ENCODE measurements at regions of chr19 and their contacts with region 1.

Region 1: GRCh38 chr19:40633207-40633606 is 32.0 kb downstream of the LTBP4 start:
- DNase-seq: no peak
- ATAC-seq: no peak
- H3K4me3 Mint-ChIP-seq: no peak overlapping the region
- H3K27ac Mint-ChIP-seq: no peak overlapping the region
- H3K4me1 Mint-ChIP-seq: peaks cover 4% of the 10 kb centered on the region
- H3K27me3 Mint-ChIP-seq: peaks cover 13% of the 10 kb centered on the region

Region 2: GRCh38 chr19:40305403-40305802 is 327.8 kb before region 1 on chr19:
- CTCF ChIA-PET with region 1: interaction called, 27 read pairs
- DNase-seq: peak; percentile 87
- ATAC-seq: peak; percentile 76
- H3K4me3 Mint-ChIP-seq: no peak overlapping the region
- H3K27ac Mint-ChIP-seq: no peak overlapping the region
- H3K4me1 Mint-ChIP-seq: peaks cover 4% of the 10 kb centered on the region
- H3K27me3 Mint-ChIP-seq: no peaks in the 10 kb centered on the region

Region 3: DNA sequence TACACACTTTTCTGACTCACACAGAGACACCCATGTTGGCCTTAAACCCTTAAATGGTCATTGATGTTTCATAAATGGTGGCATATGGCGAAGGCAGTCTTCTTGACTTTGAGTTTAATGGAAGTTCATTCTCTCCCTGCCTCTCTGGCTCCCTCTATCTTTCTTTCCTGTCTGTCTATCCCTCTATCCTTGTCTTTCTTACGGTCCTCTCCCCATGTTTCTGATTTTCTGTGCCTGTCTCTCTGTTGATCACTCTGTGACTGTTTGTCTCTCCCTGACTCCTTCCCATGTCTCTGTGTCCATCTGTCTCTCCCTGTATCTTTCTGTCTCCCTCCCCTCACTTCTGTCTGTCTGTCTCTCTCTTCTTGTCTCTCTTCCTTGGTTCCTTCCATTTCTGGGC is 99.7 kb before region 1 on chr19:
- CTCF ChIA-PET with region 1: interaction called, 12 read pairs
- DNase-seq: no peak
- ATAC-seq: no peak
- H3K4me3 Mint-ChIP-seq: no peak overlapping the region
- H3K27ac Mint-ChIP-seq: no peak overlapping the region
- H3K4me1 Mint-ChIP-seq: peaks cover 13% of the 10 kb centered on the region
- H3K27me3 Mint-ChIP-seq: peaks cover 29% of the 10 kb centered on the region

Region 4: DNA sequence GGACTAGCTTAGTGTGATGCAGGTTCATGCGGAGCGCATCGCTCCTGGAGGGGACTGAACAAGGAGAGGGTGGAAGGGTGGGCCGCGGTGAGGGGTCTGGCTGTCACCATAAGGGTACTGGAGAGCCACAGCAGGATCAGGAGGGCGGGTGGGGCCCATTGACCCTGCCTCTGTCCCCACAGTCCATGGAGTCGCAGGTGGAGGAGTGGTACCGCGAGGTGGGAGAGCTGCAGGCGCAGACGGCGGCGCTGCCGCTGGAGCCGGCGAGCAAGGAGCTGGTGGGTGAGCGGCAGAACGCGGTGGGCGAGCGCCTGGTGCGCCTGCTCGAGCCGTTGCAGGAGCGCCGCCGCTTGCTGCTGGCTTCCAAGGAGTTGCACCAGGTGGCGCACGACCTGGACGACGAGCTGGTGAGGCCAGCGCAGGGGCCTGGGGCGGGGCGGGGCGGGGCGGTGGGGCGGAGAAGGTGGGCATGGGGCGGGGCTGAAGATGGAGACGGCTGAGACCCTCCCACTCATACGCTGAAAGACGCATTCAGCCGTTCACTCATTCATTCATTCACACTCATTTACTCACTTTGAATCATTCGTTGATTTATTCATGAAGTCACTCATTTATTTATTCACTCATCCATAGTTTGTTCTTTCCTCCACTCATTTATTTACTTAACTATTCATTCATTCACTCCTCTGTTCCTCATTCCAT is 84.0 kb before region 1 on chr19:
- CTCF ChIA-PET with region 1: interaction called, 21 read pairs
- DNase-seq: peak; percentile 78
- ATAC-seq: peak; percentile 93
- H3K4me3 Mint-ChIP-seq: no peak overlapping the region
- H3K27ac Mint-ChIP-seq: no peak overlapping the region
- H3K4me1 Mint-ChIP-seq: peaks cover 8% of the 10 kb centered on the region
- H3K27me3 Mint-ChIP-seq: peaks cover 52% of the 10 kb centered on the region

Region 5: GRCh38 chr19:40603389-40604135 is 29.6 kb before region 1 on chr19:
- CTCF ChIA-PET with region 1: interaction called, 88 read pairs
- DNase-seq: peak; percentile 99
- ATAC-seq: peak; percentile 79
- H3K4me3 Mint-ChIP-seq: peak overlapping the region; percentile 73
- H3K27ac Mint-ChIP-seq: peak overlapping the region; percentile 82
- H3K4me1 Mint-ChIP-seq: peaks cover 61% of the 10 kb centered on the region
- H3K27me3 Mint-ChIP-seq: peaks cover 31% of the 10 kb centered on the region